ENCODE measurements at regions of chr17 and their contacts with region 1.

Region 1: DNA sequence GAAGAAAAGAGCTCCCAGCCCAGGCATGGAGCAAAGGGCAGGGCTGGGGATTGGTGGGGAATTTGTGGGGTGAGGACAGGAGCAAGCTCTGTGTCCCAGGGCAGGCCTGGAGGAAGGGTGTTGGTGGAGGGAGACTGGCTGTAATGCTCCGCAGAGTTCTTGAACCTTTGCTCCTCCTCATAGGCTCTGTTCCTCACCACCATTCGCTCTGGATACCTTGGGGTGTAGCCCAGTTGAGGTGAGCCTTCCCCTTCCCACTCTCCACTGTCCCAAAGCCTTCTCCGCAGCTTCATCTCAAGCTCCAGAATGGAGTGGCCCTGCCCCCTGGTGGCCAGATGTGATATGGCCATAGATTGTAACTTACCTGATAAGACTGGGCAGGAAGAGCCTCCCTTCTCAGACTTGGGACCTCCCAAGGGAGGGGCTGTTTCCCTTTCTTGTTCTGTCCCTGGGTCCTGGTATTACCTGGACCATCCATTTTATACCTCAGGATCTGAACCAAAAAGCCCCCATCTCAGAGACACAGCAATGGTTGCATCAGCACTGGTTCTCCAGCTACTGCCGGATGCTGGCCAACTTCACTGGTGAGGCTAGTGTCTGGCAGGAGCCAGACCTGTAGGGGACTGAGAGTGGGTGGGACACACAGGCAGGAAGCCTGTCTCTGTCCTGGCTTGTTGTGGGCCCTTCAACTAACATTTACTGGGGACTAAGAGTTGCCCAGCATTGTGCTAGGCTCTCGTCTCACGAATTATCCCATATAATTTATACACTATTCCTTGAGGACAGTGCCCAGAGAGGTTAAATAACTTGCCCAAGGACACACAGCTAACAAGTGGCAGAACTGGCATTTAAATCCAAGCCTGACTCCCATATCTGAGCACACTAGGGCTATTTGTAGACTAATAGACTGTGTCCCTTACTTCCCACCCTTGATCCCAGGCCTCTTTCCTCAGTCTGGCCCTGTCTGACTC is 19.1 kb upstream of the STAC2 start:
- DNase-seq: peak; percentile 100
- H3K4me3 Mint-ChIP-seq: no peak overlapping the region
- H3K27ac Mint-ChIP-seq: peak overlapping the region; percentile 3
- H3K4me1 Mint-ChIP-seq: peaks cover 15% of the 10 kb centered on the region
- H3K27me3 Mint-ChIP-seq: peaks cover 26% of the 10 kb centered on the region
- CTCF ChIP-seq: peak; percentile 100

Region 2: GRCh38 chr17:39115135-39115534 is 129.8 kb before region 1 on chr17:
- CTCF ChIA-PET with region 1: no interaction called
- intact Hi-C with region 1: no loop called
- DNase-seq: no peak
- H3K4me3 Mint-ChIP-seq: no peak overlapping the region
- H3K27ac Mint-ChIP-seq: no peak overlapping the region
- H3K4me1 Mint-ChIP-seq: peaks cover 12% of the 10 kb centered on the region
- H3K27me3 Mint-ChIP-seq: peaks cover 96% of the 10 kb centered on the region
- CTCF ChIP-seq: no peak

Region 3: DNA sequence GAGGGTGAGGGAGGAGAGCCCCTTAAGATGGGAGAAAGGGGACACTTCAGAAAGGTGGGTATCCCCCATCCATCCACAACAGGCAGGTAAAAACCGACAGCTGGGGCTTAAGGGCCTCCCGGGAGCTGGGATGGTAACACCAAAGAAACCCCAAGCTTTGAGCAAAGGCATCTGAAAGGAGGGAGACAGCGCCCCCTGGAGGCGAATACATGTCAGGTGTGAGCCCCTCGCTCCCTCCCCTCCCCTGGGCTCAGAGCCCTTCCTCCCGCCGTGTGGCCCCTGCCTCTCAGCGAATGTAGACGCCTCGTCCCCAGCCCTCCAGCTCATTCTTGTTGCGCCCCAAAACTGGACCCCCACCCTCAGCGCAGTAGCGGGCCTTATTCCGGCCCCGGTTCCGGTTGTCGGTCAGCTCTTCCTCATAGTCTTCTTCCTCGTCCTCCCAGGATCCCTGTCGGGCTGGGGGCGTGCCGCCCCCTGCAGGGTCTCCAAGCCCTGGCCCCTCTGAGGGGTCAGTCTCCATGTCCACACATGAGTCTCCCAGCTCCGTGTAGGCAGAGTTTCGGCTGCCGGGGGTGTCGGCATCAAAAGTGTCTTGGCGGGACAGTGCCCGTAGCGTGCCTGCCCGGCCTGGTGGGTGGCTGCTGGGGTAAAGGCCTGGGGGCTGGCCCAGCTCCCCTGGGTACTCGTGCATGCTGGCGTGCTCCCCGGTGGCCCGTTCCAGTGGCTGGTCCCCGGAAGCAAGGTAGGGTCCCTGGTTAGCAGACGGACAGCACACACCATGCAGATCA is 69.8 kb before region 1 on chr17:
- CTCF ChIA-PET with region 1: interaction called, 19 read pairs
- intact Hi-C with region 1: no loop called
- DNase-seq: peak; percentile 92
- H3K4me3 Mint-ChIP-seq: no peak overlapping the region
- H3K27ac Mint-ChIP-seq: no peak overlapping the region
- H3K4me1 Mint-ChIP-seq: peaks cover 16% of the 10 kb centered on the region
- H3K27me3 Mint-ChIP-seq: no peaks in the 10 kb centered on the region
- CTCF ChIP-seq: peak; percentile 100

Region 4: GRCh38 chr17:39199820-39200069 is 45.1 kb before region 1 on chr17:
- CTCF ChIA-PET with region 1: interaction called, 442 read pairs
- intact Hi-C with region 1: no loop called
- DNase-seq: peak; percentile 99
- H3K4me3 Mint-ChIP-seq: peak overlapping the region; percentile 86
- H3K27ac Mint-ChIP-seq: peak overlapping the region; percentile 99
- H3K4me1 Mint-ChIP-seq: peaks cover 41% of the 10 kb centered on the region
- H3K27me3 Mint-ChIP-seq: no peaks in the 10 kb centered on the region
- CTCF ChIP-seq: no peak

Region 5: GRCh38 chr17:39219647-39220154 is 25.2 kb before region 1 on chr17:
- CTCF ChIA-PET with region 1: interaction called, 73 read pairs
- intact Hi-C with region 1: no loop called
- DNase-seq: no peak
- H3K4me3 Mint-ChIP-seq: no peak overlapping the region
- H3K27ac Mint-ChIP-seq: no peak overlapping the region
- H3K4me1 Mint-ChIP-seq: no peaks in the 10 kb centered on the region
- H3K27me3 Mint-ChIP-seq: peaks cover 87% of the 10 kb centered on the region
- CTCF ChIP-seq: no peak

Region 6: GRCh38 chr17:39352511-39352910 is 107.6 kb after region 1 on chr17:
- CTCF ChIA-PET with region 1: interaction called, 17 read pairs
- intact Hi-C with region 1: no loop called
- DNase-seq: no peak
- H3K4me3 Mint-ChIP-seq: no peak overlapping the region
- H3K27ac Mint-ChIP-seq: peak overlapping the region; percentile 96
- H3K4me1 Mint-ChIP-seq: peaks cover 41% of the 10 kb centered on the region
- H3K27me3 Mint-ChIP-seq: no peaks in the 10 kb centered on the region
- CTCF ChIP-seq: peak; percentile 59

Measured in Calu3 (cell line).